ENCODE measurements at regions of chr18 and their contacts with region 1.

Region 1: DNA sequence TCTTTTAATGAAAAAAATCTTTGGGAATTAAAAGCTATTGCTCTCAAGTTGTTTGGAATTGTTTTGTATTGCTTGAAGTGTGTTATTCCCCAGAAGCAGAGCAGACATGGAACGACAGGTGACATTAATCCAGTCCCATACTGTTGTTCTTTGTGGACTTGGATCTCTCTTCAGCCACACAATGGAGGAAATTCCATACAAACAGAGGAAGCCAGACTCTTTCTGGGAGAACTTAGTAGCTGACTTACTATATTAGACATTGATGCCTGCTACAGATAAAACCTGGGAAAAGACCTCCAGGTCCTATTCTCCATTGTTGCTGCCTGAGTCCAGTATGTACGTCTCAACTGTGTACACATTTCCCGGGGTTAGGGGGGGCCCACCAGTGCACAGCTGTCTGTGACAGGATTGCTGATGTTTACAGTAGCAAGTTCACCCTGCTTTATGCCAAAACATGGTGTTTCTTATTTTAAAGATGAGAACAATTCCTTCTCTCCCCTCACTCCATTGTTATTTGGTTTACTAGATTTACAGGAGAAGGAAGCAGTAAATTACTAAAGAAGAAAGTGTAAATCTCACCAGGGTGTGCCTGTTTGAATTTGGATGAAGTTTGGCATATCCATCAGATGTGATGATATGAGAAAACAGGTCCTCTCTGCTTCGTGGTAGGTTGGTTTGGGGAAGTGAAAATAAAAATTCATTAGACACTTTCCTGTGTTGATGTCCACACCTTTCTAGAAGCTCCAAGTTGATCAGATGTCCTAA is 142.4 kb upstream of the RBBP8 start:
- DNase-seq: no peak
- H3K4me3 ChIP-seq: no peak overlapping the region
- H3K27ac ChIP-seq: no peak overlapping the region
- H3K4me1 ChIP-seq: no peaks in the 10 kb centered on the region
- H3K27me3 ChIP-seq: no peaks in the 10 kb centered on the region
- CTCF ChIP-seq: no peak
- EP300 ChIP-seq: no peak
- POLR2A ChIP-seq: no peak

Region 2: GRCh38 chr18:22977847-22978701 is 187.3 kb after region 1 on chr18:
- in situ Hi-C with region 1: loop called in 1 of 4 experiments (anchors 10 kb)
- intact Hi-C with region 1: no loop called
- DNase-seq: no peak
- H3K4me3 ChIP-seq: no peak overlapping the region
- H3K27ac ChIP-seq: no peak overlapping the region
- H3K4me1 ChIP-seq: peaks cover 4 to 34% (median 14%) of the 10 kb centered on the region in 4 donors
- H3K27me3 ChIP-seq: no peaks in the 10 kb centered on the region
- CTCF ChIP-seq: no peak
- EP300 ChIP-seq: no peak
- POLR2A ChIP-seq: no peak

Measured in transverse colon (tissue), 4 donors.